Posterior cingulate gyrus (tissue), 11 donors: ENCODE measurements at regions of chr6 and their contacts with region 1.

Region 1: DNA sequence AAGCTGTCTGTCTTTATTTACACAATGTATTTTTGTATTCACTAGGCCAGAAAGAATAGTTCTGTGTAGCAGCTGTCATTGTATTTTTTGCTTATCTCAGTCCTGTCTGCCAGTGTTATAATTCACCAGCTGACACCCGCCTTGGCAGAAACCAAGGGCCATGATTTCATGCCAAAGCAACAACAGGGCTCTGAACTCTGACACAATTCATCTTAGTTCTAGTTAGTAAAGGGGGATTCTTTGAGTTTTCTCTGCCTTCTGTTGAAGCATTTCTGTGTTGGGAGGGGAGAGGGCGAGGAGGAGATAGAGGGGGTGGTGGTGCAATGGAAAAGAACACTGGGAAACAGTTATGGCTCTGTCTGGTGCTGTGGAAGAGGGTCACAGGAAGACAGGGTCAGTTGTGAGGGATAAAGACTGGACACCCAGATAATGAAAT is 684.6 kb upstream of the MARCKS start:
- DNase-seq: peak; percentile 40 to 94 (median 72)

Region 2: DNA sequence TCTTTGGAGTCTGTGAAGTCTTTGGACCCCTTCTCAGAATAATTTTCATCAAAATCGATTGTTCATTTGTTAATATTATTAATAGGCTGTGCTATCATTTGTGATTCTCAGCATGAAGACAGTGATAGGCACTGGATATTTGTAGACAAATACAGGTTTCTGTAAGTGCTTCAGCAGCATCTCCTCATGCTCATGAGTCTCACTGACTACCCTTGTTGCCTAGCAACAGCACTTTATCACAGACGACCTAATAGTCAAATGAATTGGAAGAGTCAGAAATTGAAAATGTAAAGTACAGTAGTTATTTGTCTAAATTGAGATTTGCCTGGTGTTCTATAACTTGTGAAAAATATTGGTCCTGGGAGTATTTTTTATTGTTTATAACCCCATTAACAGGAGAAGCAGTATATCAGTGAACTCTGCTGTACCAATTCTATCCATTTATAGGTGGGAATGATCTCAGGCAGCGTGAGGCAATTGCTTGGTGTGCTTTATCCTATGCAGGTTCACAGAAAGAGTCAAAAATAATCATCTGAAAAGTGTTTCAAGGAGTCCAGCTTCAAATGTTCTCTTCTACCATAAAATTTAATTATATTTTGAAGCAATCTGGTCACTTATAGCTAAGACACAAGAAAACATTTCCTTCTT is 140.8 kb before region 1 on chr6:
- intact Hi-C with region 1: no loop called
- DNase-seq: no peak

Region 3: DNA sequence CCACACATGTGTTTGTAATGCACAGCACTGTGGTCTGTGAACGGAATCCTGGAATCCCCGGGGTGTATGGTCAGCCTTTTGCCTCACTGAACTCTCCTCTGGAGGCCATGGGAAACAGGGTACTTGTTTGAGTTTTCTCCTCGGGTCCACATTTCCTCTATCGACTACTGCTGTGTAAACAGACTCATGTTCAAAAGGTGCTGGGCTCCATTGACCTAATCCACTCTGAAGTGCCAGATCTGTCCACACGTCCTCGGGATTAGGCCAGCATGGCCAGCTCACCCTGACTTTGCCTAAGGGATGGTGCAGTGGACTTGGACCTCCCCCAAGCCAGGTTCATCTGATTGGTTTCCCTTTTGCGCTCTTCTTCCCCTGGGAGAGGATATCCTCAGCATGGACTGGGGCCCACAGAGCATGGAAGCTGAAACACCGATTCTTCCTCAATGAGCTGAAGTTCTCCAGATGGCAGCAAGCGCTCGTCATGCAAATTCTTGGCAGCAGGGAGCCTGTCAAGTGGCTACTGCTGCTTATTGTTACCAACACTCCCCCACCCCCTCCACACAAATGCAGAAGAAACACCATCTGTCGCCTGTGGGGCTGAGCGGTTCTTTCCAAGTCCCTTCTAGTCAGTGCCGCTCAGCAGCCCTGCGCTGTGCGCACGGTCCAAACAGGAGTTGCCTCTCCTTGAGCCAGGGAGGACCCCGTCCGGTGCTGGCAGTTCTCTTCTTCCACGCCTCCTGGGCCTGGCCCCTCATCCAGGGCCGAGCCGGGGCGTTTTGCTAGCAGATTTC is 392.0 kb after region 1 on chr6:
- intact Hi-C with region 1: loop called (anchors 5 kb)
- DNase-seq: peak; percentile 66 to 96 (median 79)